ENCODE measurements at regions of chr5 and their contacts with region 1.

Region 1: GRCh38 chr5:102922799-102923477 is 167.8 kb downstream of the PAM start:
- DNase-seq: no peak
- ATAC-seq: peak in 2 of 4 donors; percentile 29 to 45
- H3K4me3 ChIP-seq: no peak overlapping the region
- H3K27ac ChIP-seq: peak overlapping the region in 3 of 12 donors; percentile 7 to 42 (median 12)
- H3K4me1 ChIP-seq: peaks cover 0 to 42% (median 20%) of the 10 kb centered on the region in 12 donors
- H3K27me3 ChIP-seq: no peaks in the 10 kb centered on the region
- CTCF ChIP-seq: no peak
- POLR2A ChIP-seq: no peak

Region 2: DNA sequence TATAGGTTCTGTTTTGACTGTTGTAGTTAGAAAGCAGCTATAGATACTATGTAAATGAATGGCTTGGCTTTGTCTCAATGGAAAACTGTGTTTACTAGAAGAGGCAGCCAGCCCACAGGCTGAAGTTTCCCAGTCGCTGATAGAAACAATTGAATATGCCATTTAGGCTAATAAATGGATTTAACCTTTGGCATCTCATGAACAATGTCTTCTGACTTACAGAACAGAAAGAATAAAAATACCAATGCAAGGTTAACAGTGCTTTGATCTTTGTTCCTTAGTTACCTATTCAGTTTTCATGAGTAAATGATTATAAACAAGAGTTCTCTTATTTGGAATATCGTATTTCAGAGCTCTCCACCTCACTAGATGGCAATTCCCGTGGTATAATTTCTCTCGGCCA is 47.2 kb before region 1 on chr5:
- intact Hi-C with region 1: loop called in 1 of 10 experiments (anchors 5 kb)
- DNase-seq: no peak
- ATAC-seq: no peak
- H3K4me3 ChIP-seq: no peak overlapping the region
- H3K27ac ChIP-seq: peak overlapping the region in 2 of 12 donors; percentile 11 to 21
- H3K4me1 ChIP-seq: peaks cover 0 to 34% (median 10%) of the 10 kb centered on the region in 12 donors
- H3K27me3 ChIP-seq: no peaks in the 10 kb centered on the region
- CTCF ChIP-seq: no peak
- POLR2A ChIP-seq: no peak